ENCODE measurements at regions of chr1 and their contacts with region 1.

Region 1: GRCh38 chr1:219837274-219837993 is 90.9 kb downstream of the SLC30A10 start:
- DNase-seq: peak; percentile 57 to 87 (median 66)
- ATAC-seq: peak; percentile 95
- H3K4me3 ChIP-seq: no peak overlapping the region
- H3K27ac ChIP-seq: no peak overlapping the region
- H3K4me1 ChIP-seq: peaks cover 6 to 9% of the 10 kb centered on the region in 2 experiments
- H3K27me3 ChIP-seq: peaks cover 10 to 11% of the 10 kb centered on the region in 2 experiments; a peak in 4 of 5 replicates
- CTCF ChIP-seq: peak; percentile 69 to 91 (median 89)
- EP300 ChIP-seq: no peak
- POLR2A ChIP-seq: no peak
- RAD21 ChIP-seq: peak; percentile 93 to 97

Region 2: DNA sequence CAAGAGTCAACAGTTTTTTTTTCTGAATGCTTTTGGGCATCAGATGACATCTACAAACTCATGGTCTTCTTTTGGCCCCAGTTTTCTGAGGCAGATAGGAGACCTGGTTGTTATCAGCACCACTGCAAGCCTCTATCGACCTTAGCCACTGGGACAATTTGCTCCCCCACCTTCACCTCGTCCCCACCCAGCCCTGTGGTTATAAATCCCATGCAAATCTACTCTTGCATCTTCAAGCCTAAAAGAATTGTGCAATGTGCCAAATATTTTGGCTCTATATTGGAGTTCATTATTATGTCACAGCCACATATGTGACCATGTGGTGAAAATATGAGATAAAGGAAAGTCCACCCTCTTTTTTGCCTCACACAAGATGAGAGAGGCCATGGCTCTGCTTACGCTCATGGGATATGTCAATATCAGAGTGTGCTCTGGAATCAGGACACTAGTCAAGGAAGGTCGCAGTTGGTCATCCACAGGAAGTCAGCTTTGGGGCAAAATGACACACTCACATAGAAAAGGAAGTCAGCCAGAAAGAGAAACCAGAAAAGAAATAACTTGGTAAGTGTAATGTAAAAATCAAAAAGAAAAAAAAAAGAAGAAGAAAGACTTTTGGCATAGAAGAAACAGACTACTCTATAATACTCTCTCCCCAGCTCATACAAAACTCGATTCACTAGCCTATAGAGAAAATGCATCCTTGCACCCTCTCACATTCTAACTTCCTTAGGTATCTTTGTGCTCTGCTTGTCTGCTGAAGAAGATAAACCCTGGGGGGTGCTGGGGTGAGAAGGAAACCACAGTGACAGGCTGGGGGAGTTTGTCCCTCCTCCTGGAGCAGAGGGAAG is 69.7 kb after region 1 on chr1:
- CTCF ChIA-PET with region 1: no interaction called
- POLR2A ChIA-PET with region 1: no interaction called
- in situ Hi-C with region 1: no loop called
- intact Hi-C with region 1: loop called (anchors 1 kb)
- DNase-seq: peak; percentile 87 to 99 (median 91)
- ATAC-seq: peak; percentile 82
- H3K4me3 ChIP-seq: peak overlapping the region; percentile 3; the same call in 1 of the 2 replicates
- H3K27ac ChIP-seq: peak overlapping the region; percentile 79
- H3K4me1 ChIP-seq: peaks cover 43 to 80% of the 10 kb centered on the region in 2 experiments
- H3K27me3 ChIP-seq: no peaks in the 10 kb centered on the region
- CTCF ChIP-seq: no peak
- EP300 ChIP-seq: peak; percentile 98
- POLR2A ChIP-seq: peak; percentile 41; the same call in 1 of the 2 replicates
- RAD21 ChIP-seq: peak; percentile 17 to 26; a peak in 2 of 4 replicates

Region 3: GRCh38 chr1:219990782-219991510 is 153.5 kb after region 1 on chr1:
- CTCF ChIA-PET with region 1: interaction called, 5 read pairs
- POLR2A ChIA-PET with region 1: interaction called, 5 read pairs
- in situ Hi-C with region 1: no loop called
- intact Hi-C with region 1: loop called (anchors 2 kb)
- DNase-seq: peak in 3 of 4 experiments; percentile 26 to 56 (median 28)
- ATAC-seq: peak; percentile 52
- H3K4me3 ChIP-seq: no peak overlapping the region
- H3K27ac ChIP-seq: no peak overlapping the region
- H3K4me1 ChIP-seq: no peaks in the 10 kb centered on the region; a peak in 1 of 5 replicates
- H3K27me3 ChIP-seq: no peaks in the 10 kb centered on the region
- CTCF ChIP-seq: peak in 2 of 3 experiments; percentile 28 to 76; a peak in 3 of 6 replicates
- EP300 ChIP-seq: no peak
- POLR2A ChIP-seq: no peak
- RAD21 ChIP-seq: peak; percentile 39 to 48; a peak in 3 of 4 replicates

Region 4: GRCh38 chr1:220113136-220113695 is 275.8 kb after region 1 on chr1:
- CTCF ChIA-PET with region 1: no interaction called
- POLR2A ChIA-PET with region 1: no interaction called
- in situ Hi-C with region 1: no loop called
- intact Hi-C with region 1: loop called (anchors 10 kb)
- DNase-seq: peak; percentile 49 to 68 (median 61)
- ATAC-seq: peak; percentile 87
- H3K4me3 ChIP-seq: no peak overlapping the region
- H3K27ac ChIP-seq: no peak overlapping the region
- H3K4me1 ChIP-seq: no peaks in the 10 kb centered on the region
- H3K27me3 ChIP-seq: no peaks in the 10 kb centered on the region
- CTCF ChIP-seq: peak; percentile 41 to 79 (median 76); a peak in 5 of 6 replicates
- EP300 ChIP-seq: no peak
- POLR2A ChIP-seq: no peak
- RAD21 ChIP-seq: peak; percentile 22 to 34; a peak in 2 of 4 replicates

Region 5: GRCh38 chr1:220189750-220190347 is 352.4 kb after region 1 on chr1:
- CTCF ChIA-PET with region 1: no interaction called
- POLR2A ChIA-PET with region 1: no interaction called
- in situ Hi-C with region 1: no loop called
- intact Hi-C with region 1: loop called (anchors 5 kb)
- DNase-seq: peak; percentile 33 to 38 (median 35)
- ATAC-seq: peak; percentile 81
- H3K4me3 ChIP-seq: no peak overlapping the region
- H3K27ac ChIP-seq: no peak overlapping the region
- H3K4me1 ChIP-seq: no peaks in the 10 kb centered on the region
- H3K27me3 ChIP-seq: no peaks in the 10 kb centered on the region
- CTCF ChIP-seq: peak in 2 of 3 experiments; percentile 47 to 71; a peak in 3 of 6 replicates
- EP300 ChIP-seq: no peak
- POLR2A ChIP-seq: no peak
- RAD21 ChIP-seq: peak; percentile 49 to 77

Region 6: GRCh38 chr1:220281159-220281574 is 443.7 kb after region 1 on chr1:
- CTCF ChIA-PET with region 1: no interaction called
- POLR2A ChIA-PET with region 1: no interaction called
- in situ Hi-C with region 1: no loop called
- intact Hi-C with region 1: loop called (anchors 5 kb)
- DNase-seq: peak in 2 of 4 experiments; percentile 36 to 47
- ATAC-seq: peak; percentile 78
- H3K4me3 ChIP-seq: no peak overlapping the region
- H3K27ac ChIP-seq: no peak overlapping the region
- H3K4me1 ChIP-seq: no peaks in the 10 kb centered on the region
- H3K27me3 ChIP-seq: peaks cover 8 to 17% of the 10 kb centered on the region in 2 experiments; a peak in 4 of 5 replicates
- CTCF ChIP-seq: peak; percentile 52 to 73 (median 57); a peak in 5 of 6 replicates
- EP300 ChIP-seq: no peak; the same call in 1 of the 2 replicates
- POLR2A ChIP-seq: no peak
- RAD21 ChIP-seq: peak; percentile 69 to 89

Region 7: DNA sequence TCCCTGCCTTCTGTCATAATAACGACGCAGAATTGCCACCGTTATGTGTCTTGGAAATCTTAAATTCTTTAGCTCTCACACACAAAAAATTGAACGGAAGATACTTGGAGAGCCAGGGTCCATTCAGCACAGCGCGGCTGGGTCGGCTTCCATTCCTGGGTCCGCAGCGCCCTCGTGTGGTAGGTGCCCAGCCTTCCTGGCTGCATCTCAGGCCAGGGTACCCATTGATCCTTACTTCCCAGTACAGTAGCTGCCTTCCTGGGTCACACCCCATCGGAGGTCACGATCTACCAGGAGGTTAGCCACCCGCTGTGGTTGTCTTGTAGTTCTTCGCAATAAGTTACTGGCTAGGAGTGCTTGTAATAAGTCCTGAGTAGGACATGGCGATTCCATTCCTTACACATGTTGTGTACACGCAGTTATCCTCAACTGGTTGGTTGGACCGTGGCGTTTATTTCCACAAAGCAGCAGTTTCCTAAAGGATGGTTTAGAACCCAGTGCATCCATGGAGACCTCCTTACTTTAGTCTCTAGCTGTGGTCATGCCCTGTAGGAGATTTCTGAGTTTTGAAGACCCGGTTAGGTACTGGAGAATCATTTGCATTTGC is 939.4 kb after region 1 on chr1:
- CTCF ChIA-PET with region 1: interaction called, 8 read pairs
- POLR2A ChIA-PET with region 1: no interaction called
- in situ Hi-C with region 1: loop called (anchors 10 kb)
- intact Hi-C with region 1: loop called (anchors 2 kb)
- DNase-seq: peak; percentile 83 to 87 (median 86)
- ATAC-seq: peak; percentile 100
- H3K4me3 ChIP-seq: no peak overlapping the region
- H3K27ac ChIP-seq: no peak overlapping the region
- H3K4me1 ChIP-seq: no peaks in the 10 kb centered on the region
- H3K27me3 ChIP-seq: peaks cover 0 to 7% of the 10 kb centered on the region in 2 experiments; a peak in 1 of 5 replicates
- CTCF ChIP-seq: peak; percentile 88 to 97 (median 91)
- EP300 ChIP-seq: no peak
- POLR2A ChIP-seq: no peak
- RAD21 ChIP-seq: peak; percentile 93 to 95